ENCODE measurements at regions of chrX and their contacts with region 1.

Region 1: DNA sequence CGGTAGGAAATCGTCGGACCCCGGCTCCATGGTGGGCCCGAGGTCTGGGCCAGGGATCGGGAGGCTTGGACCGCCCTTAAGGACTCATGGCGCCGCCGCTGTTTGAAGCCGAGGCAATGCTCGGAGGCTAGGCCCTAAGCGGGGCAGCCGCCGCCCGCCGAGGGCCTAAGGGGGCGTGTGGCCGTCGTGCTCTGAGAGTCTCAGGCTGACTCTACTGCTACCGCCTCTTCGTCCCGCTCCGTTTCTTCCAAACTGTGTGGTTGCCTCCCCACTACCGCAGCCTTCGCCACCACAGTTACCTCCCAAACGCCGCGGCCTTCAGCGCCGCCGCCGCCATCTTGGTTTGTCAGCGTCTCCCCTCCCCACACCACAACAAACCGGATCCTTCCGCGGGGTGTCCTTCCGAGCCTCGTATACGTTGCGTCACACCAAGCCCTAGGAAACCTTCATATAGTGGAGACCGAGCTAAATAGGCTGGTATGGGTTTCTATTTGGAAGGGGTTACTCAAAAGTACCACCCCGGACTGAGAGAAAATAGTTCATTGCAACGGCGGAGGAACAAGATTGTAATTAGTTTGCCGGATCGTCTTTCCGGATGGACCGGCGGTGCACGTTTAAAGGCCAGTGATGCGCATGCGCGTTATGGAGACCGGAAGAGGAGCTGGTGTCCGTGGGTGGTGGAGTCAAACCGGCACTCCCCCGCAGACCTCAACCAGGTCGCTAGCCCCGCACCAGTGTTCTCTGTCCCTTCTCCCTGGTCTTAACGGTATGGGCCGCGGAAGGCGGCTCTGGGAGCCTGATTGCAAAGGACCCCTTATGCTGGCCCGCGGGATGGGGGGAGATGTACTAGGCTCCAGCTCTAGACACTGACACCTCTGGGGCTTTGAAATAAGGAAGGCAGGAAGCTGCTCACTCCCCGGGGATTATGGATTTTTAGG is at the start of gene KDM5C:
- DNase-seq: peak; percentile 60 to 96 (median 89)
- ATAC-seq: peak; percentile 70
- H3K4me3 ChIP-seq: peak within 1 kb of the TSS; percentile 81 to 97
- H3K4me3 Mint-ChIP-seq: peak within 1 kb of the TSS; percentile 97
- H3K27ac ChIP-seq: peak within 1 kb of the TSS; percentile 92 to 98
- H3K27ac Mint-ChIP-seq: peak within 1 kb of the TSS; percentile 99
- H3K4me1 ChIP-seq: peaks cover 36% of the 10 kb centered on the region
- H3K4me1 Mint-ChIP-seq: peaks cover 39% of the 10 kb centered on the region
- H3K27me3 ChIP-seq: no peaks in the 10 kb centered on the region
- H3K27me3 Mint-ChIP-seq: no peaks in the 10 kb centered on the region
- CTCF ChIP-seq: no peak
- total RNA-seq, gene KDM5C: 276 to 295 TPM

Region 2: DNA sequence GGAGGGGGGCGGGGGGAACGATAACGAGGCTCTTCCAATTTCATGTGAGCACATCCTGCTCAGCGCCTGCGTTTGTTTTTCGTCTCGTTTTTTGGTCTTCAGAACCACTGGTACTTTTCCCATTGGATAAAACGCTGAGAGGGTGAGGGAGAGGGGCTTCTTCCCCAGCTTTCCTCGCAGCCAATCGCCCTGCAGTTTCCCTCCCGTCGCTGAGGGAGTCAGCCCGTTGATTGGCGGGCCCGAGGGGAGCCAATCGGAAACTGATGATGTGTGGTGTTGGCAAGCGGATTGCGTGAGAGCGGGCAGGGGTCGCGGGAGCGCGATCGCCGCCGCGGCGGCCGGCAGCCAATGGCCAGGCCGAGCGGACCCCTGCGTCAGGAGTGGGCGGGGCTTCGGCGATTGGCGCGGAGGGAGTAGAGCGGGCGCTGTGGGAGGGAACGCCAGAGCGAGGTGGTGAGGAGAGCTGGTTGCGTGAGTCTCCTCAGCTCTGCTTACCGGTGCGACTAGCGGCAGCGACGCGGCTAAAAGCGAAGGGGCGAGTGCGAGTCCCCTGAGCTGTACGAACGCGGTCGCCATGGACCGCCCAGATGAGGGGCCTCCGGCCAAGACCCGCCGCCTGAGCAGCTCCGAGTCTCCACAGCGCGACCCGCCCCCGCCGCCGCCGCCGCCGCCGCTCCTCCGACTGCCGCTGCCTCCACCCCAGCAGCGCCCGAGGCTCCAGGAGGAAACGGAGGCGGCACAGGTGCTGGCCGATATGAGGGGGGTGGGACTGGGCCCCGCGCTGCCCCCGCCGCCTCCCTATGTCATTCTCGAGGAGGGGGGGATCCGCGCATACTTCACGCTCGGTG is 143.0 kb before region 1 on chrX and contains the start of gene TSPYL2:
- CTCF ChIA-PET with region 1: no interaction called
- POLR2A ChIA-PET with region 1: interaction called, 3 read pairs
- intact Hi-C with region 1: loop called in 1 of 2 experiments (anchors 5 kb)
- DNase-seq: peak; percentile 85 to 96 (median 93)
- ATAC-seq: peak; percentile 77
- H3K4me3 ChIP-seq: peak within 1 kb of the TSS; percentile 68 to 75
- H3K4me3 Mint-ChIP-seq: peak within 1 kb of the TSS; percentile 88
- H3K27ac ChIP-seq: peak within 1 kb of the TSS; percentile 77 to 87
- H3K27ac Mint-ChIP-seq: peak within 1 kb of the TSS; percentile 95
- H3K4me1 ChIP-seq: peaks cover 27% of the 10 kb centered on the region
- H3K4me1 Mint-ChIP-seq: peaks cover 49% of the 10 kb centered on the region
- H3K27me3 ChIP-seq: no peaks in the 10 kb centered on the region
- H3K27me3 Mint-ChIP-seq: no peaks in the 10 kb centered on the region
- CTCF ChIP-seq: no peak
- total RNA-seq, gene TSPYL2: 978 to 1,030 TPM

Region 3: DNA sequence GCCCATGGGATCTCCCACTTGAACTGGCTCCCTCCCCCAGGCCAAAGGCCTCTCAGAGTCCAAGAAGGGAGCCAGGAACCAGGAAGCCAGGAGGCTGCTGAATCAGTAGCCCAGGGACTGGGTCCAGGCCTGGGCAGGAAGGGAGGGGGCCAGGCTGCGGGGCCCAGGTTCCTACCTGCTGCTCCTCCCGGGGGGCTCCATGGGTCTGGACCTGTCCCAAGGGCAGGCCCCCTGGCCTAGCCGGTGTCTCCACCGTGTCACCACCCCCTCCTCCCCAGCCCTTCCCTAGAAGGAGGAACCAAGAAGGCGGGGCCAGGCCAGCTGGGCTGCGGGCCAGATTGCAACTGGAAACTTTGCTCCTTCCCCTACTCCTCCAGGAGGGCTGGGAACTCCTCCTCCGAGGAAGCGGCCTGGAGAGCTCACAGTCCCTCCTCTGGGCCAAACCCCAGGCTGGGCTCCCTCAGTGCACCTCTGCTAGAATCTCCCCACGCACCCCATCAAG is 56.2 kb after region 1 on chrX and contains the start of gene IQSEC2:
- CTCF ChIA-PET with region 1: no interaction called
- POLR2A ChIA-PET with region 1: no interaction called
- intact Hi-C with region 1: no loop called
- DNase-seq: no peak
- ATAC-seq: no peak
- H3K4me3 ChIP-seq: no peak within 1 kb of the TSS
- H3K4me3 Mint-ChIP-seq: no peak within 1 kb of the TSS
- H3K27ac ChIP-seq: no peak within 1 kb of the TSS
- H3K27ac Mint-ChIP-seq: no peak within 1 kb of the TSS
- H3K4me1 ChIP-seq: peaks cover 8% of the 10 kb centered on the region
- H3K4me1 Mint-ChIP-seq: peaks cover 13% of the 10 kb centered on the region
- H3K27me3 ChIP-seq: no peaks in the 10 kb centered on the region
- H3K27me3 Mint-ChIP-seq: peaks cover 2% of the 10 kb centered on the region
- CTCF ChIP-seq: no peak
- total RNA-seq, gene IQSEC2: 0.78 to 1.0 TPM

Region 4: GRCh38 chrX:53422086-53422860 is 197.1 kb after region 1 on chrX and contains the start of gene SMC1A:
- CTCF ChIA-PET with region 1: no interaction called
- POLR2A ChIA-PET with region 1: interaction called, 3 read pairs
- intact Hi-C with region 1: loop called in 1 of 2 experiments (anchors 5 kb)
- DNase-seq: peak; percentile 86 to 98 (median 96)
- ATAC-seq: peak; percentile 89
- H3K4me3 ChIP-seq: peak within 1 kb of the TSS; percentile 92 to 94
- H3K4me3 Mint-ChIP-seq: peak within 1 kb of the TSS; percentile 94
- H3K27ac ChIP-seq: peak within 1 kb of the TSS; percentile 95 to 99
- H3K27ac Mint-ChIP-seq: peak within 1 kb of the TSS; percentile 95
- H3K4me1 ChIP-seq: peaks cover 18% of the 10 kb centered on the region
- H3K4me1 Mint-ChIP-seq: peaks cover 33% of the 10 kb centered on the region
- H3K27me3 ChIP-seq: no peaks in the 10 kb centered on the region
- H3K27me3 Mint-ChIP-seq: no peaks in the 10 kb centered on the region
- CTCF ChIP-seq: no peak
- total RNA-seq, gene SMC1A: 23.7 to 25.3 TPM